ENCODE measurements at regions of chr2 and their contacts with region 1.

Region 1: DNA sequence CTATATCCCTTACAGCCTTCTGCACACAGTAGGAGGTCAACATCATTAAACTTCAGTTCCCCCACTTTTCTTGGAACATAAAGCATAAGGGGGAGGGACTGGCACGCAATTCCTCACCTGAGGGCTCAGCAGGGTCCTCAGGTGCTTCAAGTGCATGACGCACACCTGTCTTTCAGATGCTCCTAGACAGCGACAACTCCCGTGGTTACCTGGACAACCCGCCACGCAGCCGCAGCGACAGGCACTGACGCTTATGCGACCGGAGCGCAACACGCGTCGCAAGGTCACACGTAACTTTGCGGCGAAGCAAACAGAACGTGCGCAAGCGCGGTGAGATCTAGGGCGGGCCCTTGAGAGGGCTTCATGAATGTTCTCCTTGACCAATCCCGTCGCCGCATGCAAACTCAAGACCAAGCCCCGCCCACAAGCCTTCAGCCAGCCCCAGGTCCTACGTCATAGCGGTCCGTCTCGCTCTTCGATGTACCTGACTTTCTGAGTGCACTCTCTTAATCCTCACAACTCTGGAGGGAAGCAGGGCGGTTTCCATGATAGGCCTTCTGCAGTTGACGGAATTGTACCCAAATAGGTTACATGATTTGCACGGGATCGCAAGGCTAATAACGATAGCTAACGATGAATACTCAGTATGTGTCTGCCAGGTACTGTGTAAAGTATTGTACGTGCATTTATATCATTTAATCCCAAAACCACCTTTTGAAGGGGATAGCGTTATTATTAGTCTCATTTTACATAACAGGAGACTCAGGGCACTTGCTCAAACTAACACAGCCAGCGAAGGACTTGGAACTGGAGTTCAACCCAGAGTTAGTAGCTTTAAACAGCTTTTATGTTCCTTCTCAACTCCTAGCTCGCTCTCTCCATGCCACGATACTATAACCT is at the start of gene IFT172:
- DNase-seq: peak; percentile 99
- ATAC-seq: peak; percentile 99
- total RNA-seq, gene IFT172: 19.3 TPM

Region 2: GRCh38 chr2:27428213-27428977 is 61.4 kb before region 1 on chr2 and contains the start of gene NRBP1:
- intact Hi-C with region 1: loop called (anchors 5 kb)
- DNase-seq: peak; percentile 96
- ATAC-seq: peak; percentile 98
- total RNA-seq, gene NRBP1: 58.4 TPM

Region 3: GRCh38 chr2:27545348-27546141 is 55.8 kb after region 1 on chr2:
- intact Hi-C with region 1: no loop called
- DNase-seq: no peak
- ATAC-seq: no peak

Region 4: GRCh38 chr2:27582695-27583389 is 93.1 kb after region 1 on chr2 and contains the start of gene ZNF512:
- intact Hi-C with region 1: loop called (anchors 5 kb)
- DNase-seq: peak; percentile 95
- ATAC-seq: peak; percentile 97
- total RNA-seq, gene ZNF512: 18.3 TPM

Region 5: GRCh38 chr2:27771548-27772335 is 282.0 kb after region 1 on chr2 and contains the start of gene MRPL33:
- intact Hi-C with region 1: no loop called
- DNase-seq: peak; percentile 97
- ATAC-seq: peak; percentile 97
- total RNA-seq, gene MRPL33: 360 TPM

Measured in Right ventricle myocardium inferior (tissue), 1 donor.